Mammary epithelial cell (primary cell): ENCODE measurements at regions of chr5 and their contacts with region 1.

Region 1: DNA sequence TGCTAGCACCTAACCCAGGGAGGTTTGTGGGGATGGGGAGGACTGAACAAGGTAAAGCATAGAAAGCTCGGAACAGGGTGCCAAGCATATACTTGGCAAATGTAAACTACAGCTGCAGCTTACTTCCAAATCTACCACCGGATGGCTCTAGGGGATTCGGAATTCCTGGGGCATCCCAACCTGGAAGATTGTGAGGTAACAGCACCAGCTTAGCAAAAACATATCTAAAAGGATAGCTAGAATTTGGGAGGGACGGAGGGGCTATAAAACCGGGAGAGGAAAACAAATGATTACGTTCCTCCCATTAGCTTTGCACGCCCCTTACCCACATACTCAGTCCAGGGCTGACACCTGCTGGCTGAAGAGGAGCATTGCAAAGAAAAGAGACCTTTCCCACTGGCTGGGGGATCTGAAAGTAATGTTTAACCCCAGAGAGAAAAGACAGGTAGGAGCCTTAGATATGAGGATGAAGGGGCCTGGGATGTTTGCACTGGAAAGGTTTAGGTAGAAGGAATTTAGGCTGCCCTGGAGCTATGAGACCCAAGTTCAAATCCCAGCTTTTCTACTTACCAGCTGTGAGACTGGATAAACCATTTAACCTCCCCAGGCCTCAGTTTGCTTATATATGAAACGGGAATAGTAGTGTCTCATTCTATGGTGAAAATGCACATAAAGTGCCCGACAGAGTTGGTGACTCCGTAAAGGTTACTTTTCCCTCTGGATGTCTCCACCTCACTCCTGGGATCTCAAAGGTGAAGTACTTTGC is 73.6 kb downstream of the FAM114A2 start:
- DNase-seq: peak; percentile 40
- H3K4me3 ChIP-seq: no peak overlapping the region
- H3K27ac ChIP-seq: no peak overlapping the region
- H3K4me1 ChIP-seq: peaks cover 7% of the 10 kb centered on the region
- H3K27me3 ChIP-seq: no peaks in the 10 kb centered on the region
- CTCF ChIP-seq: peak; percentile 87 to 95

Region 2: GRCh38 chr5:152532714-152533113 is 1432.3 kb before region 1 on chr5:
- CTCF ChIA-PET with region 1: no interaction called
- dilution Hi-C with region 1: no loop called
- in situ Hi-C with region 1: loop called in 1 of 2 experiments (anchors 10 kb)
- intact Hi-C with region 1: loop called (anchors 1 kb)
- DNase-seq: peak; percentile 45
- H3K4me3 ChIP-seq: no peak overlapping the region
- H3K27ac ChIP-seq: no peak overlapping the region
- H3K4me1 ChIP-seq: no peaks in the 10 kb centered on the region
- H3K27me3 ChIP-seq: no peaks in the 10 kb centered on the region
- CTCF ChIP-seq: peak; percentile 35 to 53

Region 3: DNA sequence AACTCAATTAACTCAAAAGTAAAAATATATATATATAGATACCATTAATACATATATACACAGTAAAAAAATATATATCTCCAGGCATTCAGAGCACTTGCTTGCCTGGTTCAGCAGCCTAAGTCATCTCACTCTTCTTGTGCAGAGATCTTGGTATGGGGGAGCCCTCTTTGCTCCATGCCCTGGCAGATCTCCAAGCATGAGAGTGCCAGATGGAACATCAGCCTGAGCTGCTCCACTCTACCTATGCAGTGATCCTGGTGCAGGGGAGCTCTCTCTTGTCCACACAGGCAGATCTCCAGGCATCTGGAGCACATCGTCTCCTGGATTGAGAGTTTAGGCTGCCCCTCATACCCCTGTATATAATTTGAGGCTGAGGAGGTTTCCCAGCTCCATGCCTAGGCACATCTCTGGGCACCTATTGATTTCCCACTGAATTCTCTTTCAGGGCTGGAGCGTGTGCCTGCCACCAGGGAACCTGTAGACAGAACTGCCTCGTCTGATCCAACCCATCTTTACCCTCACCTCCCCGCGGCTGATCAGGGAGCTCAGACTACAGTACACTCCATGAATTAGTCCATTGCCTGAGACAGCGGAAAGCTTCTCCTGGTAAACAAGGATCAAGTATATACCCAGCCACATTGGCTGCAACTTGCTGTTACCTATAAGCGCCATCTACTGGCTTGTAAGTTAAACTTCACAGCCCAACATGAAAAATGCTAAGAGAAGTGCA is 817.0 kb before region 1 on chr5:
- CTCF ChIA-PET with region 1: no interaction called
- dilution Hi-C with region 1: no loop called
- in situ Hi-C with region 1: loop called in 1 of 2 experiments (anchors 25 kb)
- intact Hi-C with region 1: no loop called
- DNase-seq: peak; percentile 78
- H3K4me3 ChIP-seq: no peak overlapping the region
- H3K27ac ChIP-seq: no peak overlapping the region
- H3K4me1 ChIP-seq: peaks cover 6% of the 10 kb centered on the region
- H3K27me3 ChIP-seq: no peaks in the 10 kb centered on the region
- CTCF ChIP-seq: peak; percentile 54 to 85

Region 4: GRCh38 chr5:153425914-153426313 is 539.1 kb before region 1 on chr5:
- CTCF ChIA-PET with region 1: no interaction called
- dilution Hi-C with region 1: no loop called
- in situ Hi-C with region 1: no loop called
- intact Hi-C with region 1: loop called (anchors 1 kb)
- DNase-seq: peak; percentile 11
- H3K4me3 ChIP-seq: no peak overlapping the region
- H3K27ac ChIP-seq: no peak overlapping the region
- H3K4me1 ChIP-seq: no peaks in the 10 kb centered on the region
- H3K27me3 ChIP-seq: peaks cover 2% of the 10 kb centered on the region
- CTCF ChIP-seq: peak; percentile 79 to 81

Region 5: GRCh38 chr5:153504726-153505125 is 460.3 kb before region 1 on chr5:
- CTCF ChIA-PET with region 1: no interaction called
- dilution Hi-C with region 1: no loop called
- in situ Hi-C with region 1: loop called (anchors 10 to 25 kb)
- intact Hi-C with region 1: no loop called
- DNase-seq: no peak
- H3K4me3 ChIP-seq: no peak overlapping the region
- H3K27ac ChIP-seq: no peak overlapping the region
- H3K4me1 ChIP-seq: no peaks in the 10 kb centered on the region
- H3K27me3 ChIP-seq: no peaks in the 10 kb centered on the region
- CTCF ChIP-seq: no peak

Region 6: GRCh38 chr5:153718713-153719112 is 246.3 kb before region 1 on chr5:
- CTCF ChIA-PET with region 1: interaction called, 3 read pairs
- dilution Hi-C with region 1: no loop called
- in situ Hi-C with region 1: no loop called
- intact Hi-C with region 1: loop called (anchors 2 kb)
- DNase-seq: peak; percentile 87
- H3K4me3 ChIP-seq: no peak overlapping the region
- H3K27ac ChIP-seq: no peak overlapping the region
- H3K4me1 ChIP-seq: peaks cover 15% of the 10 kb centered on the region
- H3K27me3 ChIP-seq: no peaks in the 10 kb centered on the region
- CTCF ChIP-seq: no peak